Activated T-helper 1 cell treated with anti-CD3 and anti-CD28 coated beads, Interleukin-12 subunit alpha, Interleukin-12 subunit beta, Interleukin-2, Interleukin-4 antibody, amounts not matched to agents 30 ng/mL and 10 ng/mL and 1 ng/mL, durations not matched to agents 14 hours and 24 hours and 36 hours (primary cell): ENCODE measurements at regions of chr3 and their contacts with region 1.

Region 1: DNA sequence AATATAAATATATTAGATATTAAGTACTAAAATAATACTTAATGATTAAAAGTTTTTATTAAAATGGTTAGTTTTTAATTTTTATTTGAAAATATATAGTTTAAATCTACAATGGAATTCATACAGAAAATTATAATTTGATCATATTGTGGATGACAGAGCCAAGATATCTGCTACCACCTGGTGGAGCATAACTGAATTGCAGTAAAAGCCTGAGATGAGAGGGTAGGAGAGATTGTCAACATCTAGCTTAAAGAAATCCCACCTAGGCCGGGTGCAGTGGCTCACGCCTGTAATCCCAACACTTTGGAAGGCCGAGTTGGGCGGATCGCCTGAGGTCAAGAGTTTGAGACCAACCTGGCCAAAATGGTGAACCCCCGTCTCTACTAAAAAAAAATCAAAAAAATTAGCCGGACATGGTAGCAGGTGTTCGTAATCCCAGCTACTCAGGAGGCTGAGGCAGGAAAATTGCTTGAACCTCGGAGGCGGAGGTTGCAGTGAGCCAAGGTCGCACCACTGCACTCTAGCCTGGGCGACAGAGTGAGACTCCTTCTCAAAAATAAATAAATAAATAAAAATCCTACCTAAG is 25.1 kb upstream of the CSTA start:
- DNase-seq: no peak
- H3K4me3 Mint-ChIP-seq: no peak overlapping the region
- H3K27ac Mint-ChIP-seq: no peak overlapping the region
- H3K4me1 Mint-ChIP-seq: peaks cover 28% of the 10 kb centered on the region
- H3K27me3 Mint-ChIP-seq: no peaks in the 10 kb centered on the region

Region 2: DNA sequence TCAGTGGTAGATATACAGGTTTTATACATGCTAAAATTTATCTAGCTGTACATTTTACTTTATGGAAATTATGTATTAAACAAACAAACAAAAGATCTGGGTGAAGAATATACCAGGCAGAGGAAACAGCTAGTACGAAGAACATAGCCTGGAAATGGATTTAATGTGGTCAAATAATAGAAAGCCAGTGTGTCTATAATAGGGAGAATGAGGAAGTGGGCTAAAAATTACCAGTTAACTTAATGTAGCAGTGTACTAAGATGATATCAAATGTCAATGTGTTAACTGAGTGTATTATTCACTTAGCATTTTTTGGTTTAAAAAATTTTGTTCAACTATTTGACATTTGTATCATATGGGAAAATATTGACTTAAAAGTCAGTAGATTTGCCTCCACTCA is 428.5 kb before region 1 on chr3:
- intact Hi-C with region 1: no loop called
- DNase-seq: no peak
- H3K4me3 Mint-ChIP-seq: no peak overlapping the region
- H3K27ac Mint-ChIP-seq: no peak overlapping the region
- H3K4me1 Mint-ChIP-seq: no peaks in the 10 kb centered on the region
- H3K27me3 Mint-ChIP-seq: no peaks in the 10 kb centered on the region

Region 3: DNA sequence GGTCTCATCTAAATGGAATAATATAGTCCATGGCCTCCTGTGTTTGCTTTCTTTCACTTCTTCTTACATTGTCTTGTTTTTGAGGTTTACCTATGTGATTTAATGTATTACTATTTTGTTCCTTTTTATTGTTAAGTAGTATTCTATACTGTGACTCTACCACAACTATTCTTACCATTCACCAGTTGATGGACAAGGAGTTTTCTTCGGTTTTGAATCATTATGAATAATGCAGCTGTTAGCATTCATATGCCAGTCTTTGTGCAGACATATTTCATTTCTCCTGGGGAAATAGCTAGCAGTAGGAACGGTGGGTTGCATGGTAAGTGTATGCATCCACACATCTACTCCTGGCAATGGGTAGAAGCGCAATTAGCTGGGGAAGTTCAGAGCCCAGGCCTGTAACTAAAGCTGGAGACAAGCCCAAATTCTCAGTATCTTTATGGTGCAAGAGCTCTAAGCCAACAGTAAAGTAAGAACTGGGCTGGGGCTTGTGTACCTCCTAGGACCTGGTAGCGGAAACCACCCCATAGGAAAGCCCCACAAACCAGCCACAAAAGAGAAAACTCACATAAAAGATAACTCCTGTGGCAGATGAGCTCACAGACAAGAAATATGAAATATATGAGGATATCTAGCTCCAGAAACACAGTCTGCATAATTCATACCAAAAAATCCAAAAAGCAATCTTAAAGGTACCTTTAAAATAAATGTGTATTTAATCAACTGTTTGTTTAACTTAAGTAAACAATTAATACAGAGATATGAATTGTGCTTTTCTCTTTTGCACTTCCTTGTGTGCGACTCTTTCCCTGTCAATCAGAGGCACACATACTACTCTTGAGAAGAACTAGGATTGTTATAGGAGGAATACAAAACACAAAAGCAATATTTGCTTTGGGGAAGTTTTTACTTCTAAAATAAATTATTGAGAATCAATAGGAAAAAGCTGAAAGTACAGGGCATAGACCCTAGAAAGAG is 22.4 kb after region 1 on chr3:
- intact Hi-C with region 1: loop called (anchors 1 kb)
- DNase-seq: peak; percentile 60
- H3K4me3 Mint-ChIP-seq: no peak overlapping the region
- H3K27ac Mint-ChIP-seq: peak overlapping the region; percentile 57
- H3K4me1 Mint-ChIP-seq: peaks cover 40% of the 10 kb centered on the region
- H3K27me3 Mint-ChIP-seq: peaks cover 13% of the 10 kb centered on the region

Region 4: GRCh38 chr3:123053106-123053505 is 753.1 kb after region 1 on chr3:
- intact Hi-C with region 1: no loop called
- DNase-seq: no peak
- H3K4me3 Mint-ChIP-seq: no peak overlapping the region
- H3K27ac Mint-ChIP-seq: no peak overlapping the region
- H3K4me1 Mint-ChIP-seq: no peaks in the 10 kb centered on the region
- H3K27me3 Mint-ChIP-seq: peaks cover 20% of the 10 kb centered on the region

Region 5: DNA sequence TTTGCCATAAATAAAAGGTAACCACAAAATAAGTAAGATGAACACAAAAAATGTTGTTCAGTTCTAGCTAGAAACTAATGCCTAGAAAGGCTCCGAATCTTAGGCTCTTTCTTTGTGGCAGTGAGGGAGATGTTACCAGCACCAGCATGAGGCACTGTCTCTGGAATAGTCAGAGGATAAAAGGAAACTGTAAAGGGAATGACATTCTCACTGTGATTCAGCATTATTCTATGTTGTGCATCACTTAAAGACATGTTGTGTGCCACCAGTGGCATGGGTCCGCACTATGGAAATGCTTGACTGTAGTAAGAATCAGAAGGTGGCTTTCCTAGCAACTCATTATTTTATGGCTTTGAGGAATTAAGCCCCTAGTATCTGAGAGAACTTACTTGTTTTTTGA is 972.6 kb after region 1 on chr3:
- intact Hi-C with region 1: no loop called
- DNase-seq: no peak
- H3K4me3 Mint-ChIP-seq: no peak overlapping the region
- H3K27ac Mint-ChIP-seq: no peak overlapping the region
- H3K4me1 Mint-ChIP-seq: no peaks in the 10 kb centered on the region
- H3K27me3 Mint-ChIP-seq: no peaks in the 10 kb centered on the region